HEK293 (cell line): ENCODE measurements at regions of chr15 and their contacts with region 1.

Region 1: GRCh38 chr15:71743861-71744382 is 66.4 kb upstream of the NR2E3 start:
- H3K4me3 ChIP-seq: no peak overlapping the region
- H3K27ac ChIP-seq: no peak overlapping the region
- H3K4me1 ChIP-seq: peaks cover 22% of the 10 kb centered on the region
- CTCF ChIP-seq: peak; percentile 70; the same call in 1 of the 2 replicates

Region 2: DNA sequence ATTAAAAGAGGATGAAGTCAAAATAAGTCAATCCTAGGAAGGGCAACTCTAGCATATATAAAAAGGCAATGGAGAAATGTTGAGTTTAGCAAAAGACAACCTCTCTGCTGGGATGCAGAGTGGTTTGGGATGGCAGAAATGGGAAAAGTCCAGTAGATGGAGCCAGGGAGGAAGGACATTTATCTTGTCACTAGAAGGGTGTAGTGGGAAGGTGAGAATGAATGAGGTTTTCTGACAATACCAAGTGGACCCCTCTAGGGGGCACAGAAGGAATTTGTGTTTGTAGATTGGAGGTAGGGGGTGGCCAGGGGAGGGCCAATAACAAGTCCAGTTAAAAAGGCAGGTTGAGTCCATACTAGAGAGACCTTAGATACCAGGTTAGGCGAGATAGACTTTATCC is 548.7 kb before region 1 on chr15:
- CTCF ChIA-PET with region 1: no interaction called
- POLR2A ChIA-PET with region 1: no interaction called
- H3K4me3 ChIP-seq: no peak overlapping the region
- H3K27ac ChIP-seq: no peak overlapping the region
- H3K4me1 ChIP-seq: no peaks in the 10 kb centered on the region
- CTCF ChIP-seq: peak; percentile 63

Region 3: GRCh38 chr15:71448688-71449114 is 295.2 kb before region 1 on chr15:
- CTCF ChIA-PET with region 1: interaction called, 19 read pairs
- POLR2A ChIA-PET with region 1: no interaction called
- H3K4me3 ChIP-seq: no peak overlapping the region
- H3K27ac ChIP-seq: no peak overlapping the region
- H3K4me1 ChIP-seq: peaks cover 13% of the 10 kb centered on the region
- CTCF ChIP-seq: peak; percentile 78

Region 4: GRCh38 chr15:71691458-71692417 is 52.2 kb before region 1 on chr15:
- CTCF ChIA-PET with region 1: interaction called, 10 read pairs
- POLR2A ChIA-PET with region 1: no interaction called
- H3K4me3 ChIP-seq: no peak overlapping the region; the same call in 1 of the 2 replicates
- H3K27ac ChIP-seq: peak overlapping the region; percentile 54; the same call in 1 of the 2 replicates
- H3K4me1 ChIP-seq: peaks cover 14% of the 10 kb centered on the region
- CTCF ChIP-seq: no peak

Region 5: GRCh38 chr15:71730277-71731144 is 13.4 kb before region 1 on chr15:
- CTCF ChIA-PET with region 1: interaction called, 39 read pairs
- POLR2A ChIA-PET with region 1: interaction called, 3 read pairs
- H3K4me3 ChIP-seq: no peak overlapping the region
- H3K27ac ChIP-seq: no peak overlapping the region
- H3K4me1 ChIP-seq: no peaks in the 10 kb centered on the region
- CTCF ChIP-seq: peak; percentile 69